GM12878 (cell line): ENCODE measurements at regions of chr4 and their contacts with region 1.

Region 1: DNA sequence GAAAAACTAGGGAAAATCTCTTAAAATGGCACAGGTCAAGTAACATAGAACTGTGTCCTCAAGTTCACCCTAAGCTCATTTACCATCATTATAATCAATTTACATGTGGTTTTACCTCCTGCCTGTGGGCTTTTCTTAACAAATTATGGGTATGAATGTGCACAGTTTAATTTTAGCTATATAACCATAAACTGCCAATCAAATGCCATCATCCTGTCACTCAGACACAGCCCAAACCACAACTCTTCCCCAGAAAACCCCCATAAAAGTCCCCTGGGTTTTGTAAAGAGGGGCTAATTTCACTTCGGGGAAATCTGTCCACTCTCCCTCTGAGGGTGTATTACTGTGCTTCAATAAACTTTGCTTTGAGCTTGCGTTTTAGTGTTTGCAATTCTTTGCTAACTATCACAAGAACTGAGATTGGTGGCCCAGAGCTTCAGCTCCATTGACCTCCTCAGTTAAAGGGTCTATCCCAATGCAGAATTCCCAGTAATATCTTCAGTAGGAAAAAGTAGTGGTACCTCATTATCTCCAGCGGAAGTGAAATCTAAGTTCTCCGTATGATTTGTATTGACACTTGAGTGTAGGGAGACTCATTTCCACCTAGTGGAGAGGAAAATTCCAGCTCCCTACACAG is 394.6 kb downstream of the SPOCK3 start:
- DNase-seq: peak; percentile 85
- ATAC-seq: peak; percentile 90
- H3K4me3 ChIP-seq: peak overlapping the region; percentile 23; the same call in 1 of the 2 replicates
- H3K27ac ChIP-seq: peak overlapping the region; percentile 72
- H3K4me1 ChIP-seq: no peaks in the 10 kb centered on the region
- H3K27me3 ChIP-seq: no peaks in the 10 kb centered on the region
- CTCF ChIP-seq: 0 out of 6 replicates have a peak, but pooled peaks of 1 of the 3 experiments have one; percentile 11
- EP300 ChIP-seq: peak; percentile 93 to 97
- POLR2A ChIP-seq: no peak
- RAD21 ChIP-seq: peak; percentile 28; the same call in 1 of the 2 replicates

Region 2: GRCh38 chr4:166481055-166481454 is 358.7 kb before region 1 on chr4:
- CTCF ChIA-PET with region 1: no interaction called
- POLR2A ChIA-PET with region 1: no interaction called
- RAD21 ChIA-PET with region 1: no interaction called
- SMC1A ChIA-PET with region 1: no interaction called
- in situ Hi-C with region 1: no loop called
- intact Hi-C with region 1: loop called (anchors 1 kb)
- DNase-seq: no peak
- ATAC-seq: peak; percentile 70
- H3K4me3 ChIP-seq: no peak overlapping the region
- H3K27ac ChIP-seq: no peak overlapping the region
- H3K4me1 ChIP-seq: no peaks in the 10 kb centered on the region
- H3K27me3 ChIP-seq: no peaks in the 10 kb centered on the region
- CTCF ChIP-seq: no peak
- EP300 ChIP-seq: no peak
- POLR2A ChIP-seq: no peak
- RAD21 ChIP-seq: no peak

Region 3: GRCh38 chr4:167014944-167015343 is 175.2 kb after region 1 on chr4:
- CTCF ChIA-PET with region 1: interaction called, 4 read pairs
- POLR2A ChIA-PET with region 1: no interaction called
- RAD21 ChIA-PET with region 1: interaction called, 4 read pairs
- SMC1A ChIA-PET with region 1: interaction called, 16 read pairs
- in situ Hi-C with region 1: no loop called
- intact Hi-C with region 1: loop called (anchors 5 kb)
- DNase-seq: no peak
- ATAC-seq: no peak
- H3K4me3 ChIP-seq: no peak overlapping the region
- H3K27ac ChIP-seq: no peak overlapping the region
- H3K4me1 ChIP-seq: no peaks in the 10 kb centered on the region
- H3K27me3 ChIP-seq: no peaks in the 10 kb centered on the region
- CTCF ChIP-seq: no peak
- EP300 ChIP-seq: no peak
- POLR2A ChIP-seq: no peak
- RAD21 ChIP-seq: peak; percentile 12; the same call in 1 of the 2 replicates

Region 4: GRCh38 chr4:167129146-167129545 is 289.4 kb after region 1 on chr4:
- CTCF ChIA-PET with region 1: no interaction called
- POLR2A ChIA-PET with region 1: no interaction called
- RAD21 ChIA-PET with region 1: no interaction called
- SMC1A ChIA-PET with region 1: no interaction called
- in situ Hi-C with region 1: no loop called
- intact Hi-C with region 1: no loop called
- DNase-seq: no peak
- ATAC-seq: no peak
- H3K4me3 ChIP-seq: no peak overlapping the region
- H3K27ac ChIP-seq: no peak overlapping the region
- H3K4me1 ChIP-seq: no peaks in the 10 kb centered on the region
- H3K27me3 ChIP-seq: no peaks in the 10 kb centered on the region
- CTCF ChIP-seq: no peak
- EP300 ChIP-seq: no peak
- POLR2A ChIP-seq: no peak
- RAD21 ChIP-seq: no peak